ENCODE measurements at regions of chr15 and their contacts with region 1.

Region 1: GRCh38 chr15:85831415-85832113 is 36.8 kb upstream of the KLHL25 start:
- DNase-seq: peak in 4 of 5 donors; percentile 60 to 71 (median 65)
- ATAC-seq: peak; percentile 55 to 92 (median 85)
- H3K4me3 ChIP-seq: no peak overlapping the region
- H3K27ac ChIP-seq: no peak overlapping the region
- H3K4me1 ChIP-seq: peaks cover 0 to 4% (median 0%) of the 10 kb centered on the region in 12 donors
- H3K27me3 ChIP-seq: no peaks in the 10 kb centered on the region
- CTCF ChIP-seq: peak; percentile 45 to 74 (median 64)
- POLR2A ChIP-seq: no peak

Region 2: GRCh38 chr15:85296615-85297402 is 534.8 kb before region 1 on chr15:
- intact Hi-C with region 1: loop called in 8 of 10 experiments (anchors 5 to 10 kb)
- DNase-seq: peak in 4 of 5 donors; percentile 57 to 70 (median 63)
- ATAC-seq: peak; percentile 87 to 94 (median 94)
- H3K4me3 ChIP-seq: peak overlapping the region in 9 of 12 donors; percentile 28 to 53 (median 45)
- H3K27ac ChIP-seq: peak overlapping the region in 8 of 12 donors; percentile 9 to 57 (median 41)
- H3K4me1 ChIP-seq: peaks cover 0 to 14% (median 7%) of the 10 kb centered on the region in 12 donors
- H3K27me3 ChIP-seq: no peaks in the 10 kb centered on the region
- CTCF ChIP-seq: peak; percentile 53 to 81 (median 72)
- POLR2A ChIP-seq: no peak

Region 3: GRCh38 chr15:85485956-85486567 is 345.5 kb before region 1 on chr15:
- intact Hi-C with region 1: loop called in 5 of 10 experiments (anchors 5 to 10 kb)
- DNase-seq: peak in 2 of 5 donors; percentile 49 to 62
- ATAC-seq: peak; percentile 47 to 79 (median 73)
- H3K4me3 ChIP-seq: no peak overlapping the region
- H3K27ac ChIP-seq: peak overlapping the region in 1 of 12 donors; percentile 41
- H3K4me1 ChIP-seq: peaks cover 0 to 80% (median 42%) of the 10 kb centered on the region in 12 donors
- H3K27me3 ChIP-seq: no peaks in the 10 kb centered on the region
- CTCF ChIP-seq: peak; percentile 58 to 92 (median 86)
- POLR2A ChIP-seq: no peak

Region 4: GRCh38 chr15:85582131-85583079 is 249.2 kb before region 1 on chr15:
- intact Hi-C with region 1: loop called in 1 of 10 experiments (anchors 10 kb)
- DNase-seq: peak; percentile 74 to 83 (median 80)
- ATAC-seq: peak; percentile 53 to 76 (median 61)
- H3K4me3 ChIP-seq: peak overlapping the region; percentile 29 to 66 (median 53)
- H3K27ac ChIP-seq: peak overlapping the region; percentile 82 to 96 (median 88)
- H3K4me1 ChIP-seq: peaks cover 17 to 96% (median 78%) of the 10 kb centered on the region in 12 donors
- H3K27me3 ChIP-seq: no peaks in the 10 kb centered on the region
- CTCF ChIP-seq: no peak
- POLR2A ChIP-seq: peak in 1 of 2 donors; percentile 50

Region 5: GRCh38 chr15:85618956-85619491 is 212.5 kb before region 1 on chr15:
- intact Hi-C with region 1: loop called in 4 of 10 experiments (anchors 10 kb)
- DNase-seq: peak; percentile 77 to 86 (median 81)
- ATAC-seq: peak; percentile 55 to 88 (median 77)
- H3K4me3 ChIP-seq: peak overlapping the region in 11 of 12 donors; percentile 14 to 69 (median 56)
- H3K27ac ChIP-seq: peak overlapping the region; percentile 68 to 91 (median 82)
- H3K4me1 ChIP-seq: peaks cover 21 to 100% (median 96%) of the 10 kb centered on the region in 12 donors
- H3K27me3 ChIP-seq: no peaks in the 10 kb centered on the region
- CTCF ChIP-seq: no peak
- POLR2A ChIP-seq: peak in 1 of 2 donors; percentile 56

Region 6: GRCh38 chr15:85667491-85668424 is 163.8 kb before region 1 on chr15:
- intact Hi-C with region 1: no loop called
- DNase-seq: peak in 3 of 5 donors; percentile 53 to 69 (median 57)
- ATAC-seq: peak; percentile 36 to 90 (median 88)
- H3K4me3 ChIP-seq: peak overlapping the region in 1 of 12 donors; percentile 14
- H3K27ac ChIP-seq: peak overlapping the region; percentile 26 to 93 (median 82)
- H3K4me1 ChIP-seq: peaks cover 7 to 59% (median 46%) of the 10 kb centered on the region in 12 donors
- H3K27me3 ChIP-seq: no peaks in the 10 kb centered on the region
- CTCF ChIP-seq: no peak
- POLR2A ChIP-seq: no peak

Region 7: GRCh38 chr15:85750319-85750806 is 81.2 kb before region 1 on chr15:
- intact Hi-C with region 1: loop called in 2 of 10 experiments (anchors 5 kb)
- DNase-seq: peak; percentile 75 to 89 (median 85)
- ATAC-seq: peak; percentile 50 to 78 (median 68)
- H3K4me3 ChIP-seq: peak overlapping the region in 7 of 12 donors; percentile 4 to 45 (median 23)
- H3K27ac ChIP-seq: peak overlapping the region; percentile 65 to 90 (median 76)
- H3K4me1 ChIP-seq: peaks cover 4 to 77% (median 42%) of the 10 kb centered on the region in 12 donors
- H3K27me3 ChIP-seq: no peaks in the 10 kb centered on the region
- CTCF ChIP-seq: no peak
- POLR2A ChIP-seq: no peak

Region 8: GRCh38 chr15:85941186-85941861 is 109.8 kb after region 1 on chr15:
- intact Hi-C with region 1: no loop called
- DNase-seq: no peak
- ATAC-seq: no peak
- H3K4me3 ChIP-seq: no peak overlapping the region
- H3K27ac ChIP-seq: no peak overlapping the region
- H3K4me1 ChIP-seq: no peaks in the 10 kb centered on the region
- H3K27me3 ChIP-seq: no peaks in the 10 kb centered on the region
- CTCF ChIP-seq: no peak
- POLR2A ChIP-seq: no peak